HEK293 (cell line): ENCODE measurements at regions of chr1 and their contacts with region 1.

Region 1: GRCh38 chr1:86018283-86018923 is 138.2 kb downstream of the COL24A1 start:
- H3K4me3 ChIP-seq: no peak overlapping the region
- H3K27ac ChIP-seq: no peak overlapping the region
- H3K4me1 ChIP-seq: no peaks in the 10 kb centered on the region
- CTCF ChIP-seq: no peak

Region 2: GRCh38 chr1:85734931-85735330 is 283.5 kb before region 1 on chr1:
- CTCF ChIA-PET with region 1: no interaction called
- POLR2A ChIA-PET with region 1: no interaction called
- H3K4me3 ChIP-seq: no peak overlapping the region
- H3K27ac ChIP-seq: no peak overlapping the region
- H3K4me1 ChIP-seq: no peaks in the 10 kb centered on the region
- CTCF ChIP-seq: no peak

Region 3: DNA sequence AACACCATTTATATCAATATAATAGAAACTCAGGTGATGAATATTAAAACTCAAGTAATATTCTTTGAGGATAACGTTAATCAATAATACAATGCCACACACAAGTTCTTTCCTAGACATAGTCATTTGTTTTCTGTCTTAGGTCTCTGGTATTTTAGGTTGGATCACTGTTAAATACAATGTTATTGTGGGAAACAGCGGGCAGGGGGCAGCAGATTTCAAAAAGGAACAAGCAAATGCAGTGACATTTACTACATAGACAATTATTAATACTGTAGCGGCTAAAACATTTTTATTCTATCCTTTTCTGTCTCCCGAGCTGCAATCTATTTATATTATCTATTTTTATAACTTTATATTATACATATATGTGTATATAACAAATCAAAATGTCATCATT is 123.8 kb before region 1 on chr1:
- CTCF ChIA-PET with region 1: interaction called, 18 read pairs
- POLR2A ChIA-PET with region 1: no interaction called
- H3K4me3 ChIP-seq: no peak overlapping the region
- H3K27ac ChIP-seq: no peak overlapping the region
- H3K4me1 ChIP-seq: no peaks in the 10 kb centered on the region
- CTCF ChIP-seq: no peak

Region 4: GRCh38 chr1:86030180-86030579 is 11.8 kb after region 1 on chr1:
- CTCF ChIA-PET with region 1: interaction called, 13 read pairs
- POLR2A ChIA-PET with region 1: no interaction called
- H3K4me3 ChIP-seq: no peak overlapping the region
- H3K27ac ChIP-seq: no peak overlapping the region
- H3K4me1 ChIP-seq: no peaks in the 10 kb centered on the region
- CTCF ChIP-seq: no peak

Region 5: DNA sequence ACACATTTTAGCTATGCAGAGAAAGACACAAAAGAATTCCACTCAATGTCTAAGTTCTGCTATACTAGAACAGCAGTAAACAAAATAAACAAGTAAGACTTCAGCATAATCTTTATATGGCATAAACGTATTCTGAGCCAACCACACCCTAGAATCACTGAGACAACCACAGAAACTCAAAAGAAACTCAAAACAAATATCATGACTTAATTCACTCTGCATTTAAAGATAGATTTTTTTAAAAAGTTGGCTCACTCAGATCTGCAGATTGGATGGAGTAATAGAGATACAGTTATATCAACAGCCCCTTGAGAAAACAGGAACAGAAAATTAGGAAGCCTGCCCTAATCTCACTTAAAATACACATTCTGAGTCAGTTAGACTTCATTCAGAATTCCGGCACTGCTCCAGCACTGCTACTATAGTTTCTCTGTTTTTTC is 43.2 kb after region 1 on chr1:
- CTCF ChIA-PET with region 1: no interaction called
- POLR2A ChIA-PET with region 1: no interaction called
- H3K4me3 ChIP-seq: no peak overlapping the region
- H3K27ac ChIP-seq: no peak overlapping the region
- H3K4me1 ChIP-seq: no peaks in the 10 kb centered on the region
- CTCF ChIP-seq: no peak

Region 6: GRCh38 chr1:86137436-86137835 is 119.0 kb after region 1 on chr1:
- CTCF ChIA-PET with region 1: no interaction called
- POLR2A ChIA-PET with region 1: no interaction called
- H3K4me3 ChIP-seq: no peak overlapping the region
- H3K27ac ChIP-seq: no peak overlapping the region
- H3K4me1 ChIP-seq: no peaks in the 10 kb centered on the region
- CTCF ChIP-seq: no peak